Psoas muscle (tissue), 8 donors: ENCODE measurements at regions of chr5 and their contacts with region 1.

Region 1: GRCh38 chr5:126339215-126339805 is 83.9 kb upstream of the GRAMD2B start:
- DNase-seq: no peak
- ATAC-seq: peak in 2 of 4 donors; percentile 55 to 70
- H3K4me3 ChIP-seq: no peak overlapping the region
- H3K27ac ChIP-seq: no peak overlapping the region
- H3K4me1 ChIP-seq: no peaks in the 10 kb centered on the region
- H3K27me3 ChIP-seq: no peaks in the 10 kb centered on the region
- CTCF ChIP-seq: peak; percentile 94

Region 2: DNA sequence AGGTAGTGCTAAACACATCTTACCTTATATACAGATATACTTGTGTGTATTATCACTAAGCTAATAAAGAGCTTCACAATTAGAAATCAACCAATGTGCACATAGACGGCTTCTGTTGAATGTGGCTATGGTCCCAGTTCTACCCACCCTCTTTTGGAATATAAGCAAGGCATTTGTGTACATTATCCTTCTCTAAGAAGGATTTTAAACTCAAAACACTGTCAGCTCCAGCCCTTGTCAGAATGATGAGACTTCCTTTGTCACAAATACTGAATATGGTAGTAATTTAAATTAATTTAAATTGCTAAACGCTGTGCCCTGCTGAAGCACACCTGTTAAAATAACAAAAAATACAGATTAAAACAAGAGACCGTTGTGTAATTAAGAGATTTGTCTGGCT is 24.0 kb before region 1 on chr5:
- intact Hi-C with region 1: no loop called
- DNase-seq: no peak
- ATAC-seq: no peak
- H3K4me3 ChIP-seq: no peak overlapping the region
- H3K27ac ChIP-seq: no peak overlapping the region
- H3K4me1 ChIP-seq: no peaks in the 10 kb centered on the region
- H3K27me3 ChIP-seq: no peaks in the 10 kb centered on the region
- CTCF ChIP-seq: no peak

Region 3: DNA sequence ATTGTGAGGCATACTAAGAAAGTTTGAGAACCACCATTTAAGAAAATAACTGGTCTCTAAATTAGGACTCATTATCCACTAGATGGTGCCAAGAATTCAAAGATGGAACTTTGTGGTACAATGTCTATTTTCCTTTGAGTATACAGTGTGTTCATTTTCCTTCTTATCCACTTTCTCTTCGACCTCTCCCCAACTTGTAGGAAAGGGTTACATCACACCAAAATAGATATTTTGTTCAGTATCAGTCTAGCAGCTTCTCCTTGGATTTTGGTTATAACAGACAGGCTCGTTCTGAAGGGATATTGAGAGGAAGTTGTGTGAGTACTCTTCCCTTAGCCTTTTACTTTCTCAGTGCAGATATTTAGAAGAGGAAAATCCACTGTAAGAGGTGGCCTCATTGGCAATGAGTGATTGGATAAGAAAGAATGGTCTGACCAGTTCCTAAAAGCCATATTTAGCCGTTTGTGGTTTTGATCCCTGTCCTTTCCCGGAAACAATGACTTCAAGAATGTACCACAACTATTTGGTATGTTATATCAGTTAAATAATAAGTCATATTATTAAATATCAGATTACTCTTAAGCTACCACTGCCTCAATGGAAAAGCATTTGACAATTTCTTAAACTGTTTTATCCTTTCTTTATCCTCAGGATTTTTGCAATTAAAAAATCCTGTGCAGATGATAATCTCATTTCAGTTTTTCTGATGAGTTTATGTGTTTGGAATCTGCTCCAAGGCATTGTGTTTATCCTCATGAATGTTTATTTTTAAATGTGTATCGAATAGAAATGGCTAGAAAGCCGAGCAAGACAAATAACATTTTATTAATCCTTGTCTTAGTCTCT is 14.9 kb after region 1 on chr5:
- intact Hi-C with region 1: no loop called
- DNase-seq: no peak
- ATAC-seq: peak; percentile 59 to 89 (median 72)
- H3K4me3 ChIP-seq: no peak overlapping the region
- H3K27ac ChIP-seq: no peak overlapping the region
- H3K4me1 ChIP-seq: no peaks in the 10 kb centered on the region
- H3K27me3 ChIP-seq: no peaks in the 10 kb centered on the region
- CTCF ChIP-seq: peak; percentile 56

Region 4: DNA sequence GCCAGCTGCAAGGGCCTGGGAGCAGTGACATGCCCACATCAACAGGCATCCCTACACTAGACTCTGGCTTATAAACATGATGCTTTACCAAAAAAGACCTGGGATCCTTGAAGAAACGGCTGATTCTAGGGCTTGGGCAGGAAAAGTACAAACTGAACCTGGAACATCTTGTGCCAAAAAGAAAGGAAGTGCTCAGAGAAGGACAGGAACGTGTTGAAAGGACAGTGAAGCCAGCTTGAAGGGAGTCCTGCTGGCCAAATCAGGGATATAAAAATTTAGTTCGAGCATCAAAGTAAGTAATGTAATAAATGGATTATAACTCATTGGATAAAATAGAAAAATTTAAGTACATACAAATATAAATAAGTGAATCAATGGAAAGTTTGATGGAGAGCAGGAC is 197.6 kb after region 1 on chr5:
- intact Hi-C with region 1: loop called (anchors 1 to 5 kb)
- DNase-seq: no peak
- ATAC-seq: no peak
- H3K4me3 ChIP-seq: no peak overlapping the region
- H3K27ac ChIP-seq: no peak overlapping the region
- H3K4me1 ChIP-seq: no peaks in the 10 kb centered on the region
- H3K27me3 ChIP-seq: no peaks in the 10 kb centered on the region
- CTCF ChIP-seq: no peak

Region 5: DNA sequence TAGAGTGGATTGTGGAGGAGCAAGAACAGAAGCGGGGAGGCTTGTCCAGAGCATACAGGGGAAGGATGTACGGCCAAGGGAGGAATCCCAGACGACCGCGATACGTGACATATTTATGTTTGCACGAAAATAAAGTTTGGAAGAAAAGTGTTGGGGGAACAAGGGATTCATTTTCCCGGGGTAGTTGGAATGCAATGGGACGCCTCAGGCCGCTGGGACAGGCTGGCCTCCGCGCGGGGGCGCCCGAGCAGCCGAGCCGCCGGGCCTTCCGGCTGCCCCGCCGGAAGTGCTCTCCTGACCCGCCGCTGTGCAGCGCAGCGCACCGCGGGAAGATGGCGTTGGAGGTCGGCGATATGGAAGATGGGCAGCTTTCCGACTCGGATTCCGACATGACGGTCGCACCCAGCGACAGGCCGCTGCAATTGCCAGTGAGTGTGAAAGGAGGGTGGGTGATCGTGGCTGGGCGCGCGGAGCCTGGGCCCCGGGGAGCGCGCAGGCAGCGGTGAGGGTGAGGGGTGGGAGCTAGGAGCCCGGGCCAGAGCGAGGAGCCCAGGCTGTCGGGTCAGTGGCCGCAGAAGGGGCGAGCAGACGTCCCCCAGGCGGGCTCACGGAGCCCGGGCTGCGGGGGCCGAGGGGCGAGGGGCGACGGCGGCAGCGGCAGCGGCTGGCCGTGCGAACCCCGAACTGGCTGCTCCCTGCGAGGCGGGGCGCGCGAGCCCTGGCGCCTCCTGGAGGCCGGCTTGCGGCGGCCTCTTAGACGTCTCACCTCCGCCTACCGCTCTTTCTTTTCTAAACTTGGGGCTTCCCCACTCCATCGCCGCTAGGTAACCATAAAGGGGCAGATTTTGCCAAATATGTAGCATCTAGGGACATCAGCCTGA is 261.6 kb after region 1 on chr5 and contains the start of gene PHAX:
- intact Hi-C with region 1: loop called in 1 of 2 experiments (anchors 1 kb)
- DNase-seq: peak; percentile 81 to 87
- ATAC-seq: peak; percentile 97 to 100 (median 100)
- H3K4me3 ChIP-seq: peak within 1 kb of the TSS; percentile 98
- H3K27ac ChIP-seq: peak within 1 kb of the TSS; percentile 87
- H3K4me1 ChIP-seq: peaks cover 27% of the 10 kb centered on the region
- H3K27me3 ChIP-seq: no peaks in the 10 kb centered on the region
- CTCF ChIP-seq: peak; percentile 64
- total RNA-seq, gene PHAX: 29.0 to 42.6 (median 32.0) TPM

Region 6: DNA sequence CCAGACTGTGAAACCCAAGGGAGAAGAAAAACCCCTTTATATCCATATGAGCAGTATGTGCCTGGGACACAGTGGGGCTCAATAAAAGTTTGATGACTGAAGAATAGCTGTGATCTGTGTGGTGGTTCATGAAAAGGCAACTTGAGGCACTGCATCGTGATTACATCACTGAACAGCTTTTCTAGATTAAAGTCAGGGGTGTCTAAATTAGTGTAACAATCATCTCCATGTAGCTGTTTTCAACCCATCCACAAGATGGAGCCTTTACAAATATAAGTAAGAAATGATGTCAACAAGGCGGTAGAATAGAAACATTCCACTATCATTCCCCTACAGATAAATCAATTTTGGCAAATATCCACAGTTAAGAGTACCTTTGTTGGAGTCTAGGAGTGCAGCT is 1233.6 kb after region 1 on chr5:
- intact Hi-C with region 1: no loop called
- DNase-seq: no peak
- ATAC-seq: peak in 1 of 4 donors; percentile 17
- H3K4me3 ChIP-seq: no peak overlapping the region
- H3K27ac ChIP-seq: no peak overlapping the region
- H3K4me1 ChIP-seq: no peaks in the 10 kb centered on the region
- H3K27me3 ChIP-seq: peaks cover 0 to 1% (median 0%) of the 10 kb centered on the region in 3 donors
- CTCF ChIP-seq: no peak